Heart right ventricle (tissue), 16 donors: ENCODE measurements at regions of chr6 and their contacts with region 1.

Region 1: DNA sequence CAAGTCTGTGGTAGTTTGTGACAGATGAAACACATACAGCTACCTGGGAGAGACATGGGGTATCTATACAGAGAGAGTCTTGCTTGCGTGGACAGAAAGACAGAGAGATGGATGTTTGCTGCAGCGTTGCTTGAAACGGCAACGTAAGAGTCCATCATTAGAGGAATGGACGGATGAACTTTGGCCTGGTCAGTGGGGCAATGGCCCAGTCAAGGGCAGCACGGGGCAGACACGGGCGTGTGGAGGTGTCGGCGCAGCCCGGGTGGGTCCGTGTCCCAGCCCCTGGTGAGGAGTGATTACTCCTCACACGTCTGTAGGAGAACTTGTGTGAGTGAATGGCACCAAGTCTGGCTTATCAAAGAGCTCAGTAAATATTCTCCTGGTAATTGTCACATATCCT is 21.9 kb downstream of the DACT2 start:
- DNase-seq: no peak
- ATAC-seq: no peak
- H3K4me3 ChIP-seq: no peak overlapping the region
- H3K27ac ChIP-seq: no peak overlapping the region
- H3K4me1 ChIP-seq: no peaks in the 10 kb centered on the region
- H3K27me3 ChIP-seq: peaks cover 0 to 51% (median 11%) of the 10 kb centered on the region in 7 donors
- CTCF ChIP-seq: no peak

Region 2: DNA sequence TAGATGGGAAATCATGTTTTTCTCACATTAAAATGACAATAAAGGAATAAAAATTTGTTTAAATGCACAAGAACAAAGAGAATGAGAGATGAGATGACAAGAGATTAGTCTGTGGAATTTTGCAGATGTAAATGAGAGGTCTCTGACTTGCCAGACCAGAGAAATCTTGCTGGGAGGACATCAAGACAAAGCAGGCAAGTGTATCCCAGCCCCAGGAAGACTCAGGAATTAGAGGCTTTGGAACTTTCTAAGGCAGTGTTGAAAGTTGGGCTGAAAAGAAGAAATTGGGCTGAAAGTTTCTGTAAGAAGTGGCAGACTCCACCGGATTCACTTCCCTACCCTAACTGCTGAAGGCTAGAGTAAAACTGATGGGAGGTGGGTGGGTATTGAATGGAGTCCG is 416.3 kb before region 1 on chr6:
- intact Hi-C with region 1: no loop called
- DNase-seq: no peak
- ATAC-seq: no peak
- H3K4me3 ChIP-seq: no peak overlapping the region
- H3K27ac ChIP-seq: no peak overlapping the region
- H3K4me1 ChIP-seq: peaks cover 0 to 19% (median 8%) of the 10 kb centered on the region in 9 donors
- H3K27me3 ChIP-seq: no peaks in the 10 kb centered on the region
- CTCF ChIP-seq: no peak

Region 3: GRCh38 chr6:167996424-167997199 is 301.0 kb before region 1 on chr6:
- intact Hi-C with region 1: no loop called
- DNase-seq: no peak
- ATAC-seq: no peak
- H3K4me3 ChIP-seq: no peak overlapping the region
- H3K27ac ChIP-seq: no peak overlapping the region
- H3K4me1 ChIP-seq: peaks cover 0 to 19% (median 8%) of the 10 kb centered on the region in 9 donors
- H3K27me3 ChIP-seq: peaks cover 0 to 16% (median 0%) of the 10 kb centered on the region in 7 donors
- CTCF ChIP-seq: no peak

Region 4: DNA sequence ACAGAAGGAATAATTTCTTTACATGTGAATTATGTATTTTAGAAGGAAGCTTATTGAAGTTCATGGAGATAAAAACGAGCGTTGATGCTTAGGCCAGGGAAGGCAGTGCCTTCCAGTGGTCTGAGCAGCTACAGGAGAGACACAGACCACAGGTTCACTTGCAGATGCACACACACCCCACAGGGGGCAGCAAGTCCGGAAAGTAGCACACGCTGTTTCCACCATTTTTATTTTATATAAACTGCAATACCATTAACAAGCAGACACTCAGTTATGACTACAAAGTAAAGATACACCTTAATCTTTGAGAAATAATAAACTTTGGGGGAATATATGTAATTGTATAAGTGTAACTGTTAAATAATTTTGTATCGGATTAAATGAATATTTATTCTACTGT is 35.4 kb after region 1 on chr6:
- intact Hi-C with region 1: loop called in 1 of 10 experiments (anchors 1 kb)
- DNase-seq: no peak
- ATAC-seq: no peak
- H3K4me3 ChIP-seq: no peak overlapping the region
- H3K27ac ChIP-seq: no peak overlapping the region
- H3K4me1 ChIP-seq: no peaks in the 10 kb centered on the region
- H3K27me3 ChIP-seq: peaks cover 0 to 63% (median 16%) of the 10 kb centered on the region in 7 donors
- CTCF ChIP-seq: peak in 4 of 9 donors; percentile 6 to 29 (median 20)